T-cell (primary cell): ENCODE measurements at regions of chr11 and their contacts with region 1.

Region 1: DNA sequence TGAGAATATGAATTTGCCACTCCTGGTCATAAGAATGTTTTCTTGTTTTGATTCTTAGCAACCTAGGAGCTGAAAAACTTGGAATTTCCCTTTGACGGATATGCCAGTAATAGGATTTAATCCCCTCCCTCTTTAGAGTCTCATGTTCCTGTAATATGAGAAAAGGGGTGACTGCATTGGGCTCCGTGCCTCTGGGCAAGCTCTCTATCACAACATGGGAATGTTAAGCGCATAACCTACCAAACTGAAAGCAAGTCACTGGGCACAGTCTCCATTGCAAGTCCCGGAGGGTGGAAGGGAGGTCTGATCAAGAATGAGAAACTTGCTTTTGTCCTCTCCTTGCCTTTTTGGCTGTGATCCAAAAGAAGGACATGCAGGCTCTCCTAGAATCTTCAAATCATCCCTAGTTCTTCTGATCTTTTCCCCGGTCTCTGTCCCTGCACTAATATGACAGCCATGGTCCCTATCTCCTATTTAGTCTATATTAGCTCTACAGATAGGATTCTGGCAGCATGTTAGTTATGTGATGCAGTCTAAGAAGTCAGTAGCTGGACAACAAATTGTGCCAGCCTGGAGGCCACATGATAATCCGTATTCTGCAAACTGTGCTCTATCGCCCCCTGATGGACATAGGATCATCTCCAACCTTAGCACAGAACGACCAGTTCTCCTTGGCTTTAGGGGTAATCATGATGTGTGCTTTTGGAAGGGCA is 11.7 kb downstream of the OR10D3 start:
- DNase-seq: peak in 19 of 35 experiments; percentile 4 to 59 (median 14)
- ATAC-seq: peak in 1 of 4 experiments; percentile 40
- H3K4me3 ChIP-seq: no peak overlapping the region
- H3K4me3 Mint-ChIP-seq: no peak overlapping the region
- H3K27ac ChIP-seq: no peak overlapping the region
- H3K27ac Mint-ChIP-seq: no peak overlapping the region
- H3K4me1 ChIP-seq: no peaks in the 10 kb centered on the region
- H3K4me1 Mint-ChIP-seq: no peaks in the 10 kb centered on the region
- H3K27me3 ChIP-seq: no peaks in the 10 kb centered on the region
- H3K27me3 Mint-ChIP-seq: peaks cover 9 to 22% of the 10 kb centered on the region in 2 donors

Region 2: DNA sequence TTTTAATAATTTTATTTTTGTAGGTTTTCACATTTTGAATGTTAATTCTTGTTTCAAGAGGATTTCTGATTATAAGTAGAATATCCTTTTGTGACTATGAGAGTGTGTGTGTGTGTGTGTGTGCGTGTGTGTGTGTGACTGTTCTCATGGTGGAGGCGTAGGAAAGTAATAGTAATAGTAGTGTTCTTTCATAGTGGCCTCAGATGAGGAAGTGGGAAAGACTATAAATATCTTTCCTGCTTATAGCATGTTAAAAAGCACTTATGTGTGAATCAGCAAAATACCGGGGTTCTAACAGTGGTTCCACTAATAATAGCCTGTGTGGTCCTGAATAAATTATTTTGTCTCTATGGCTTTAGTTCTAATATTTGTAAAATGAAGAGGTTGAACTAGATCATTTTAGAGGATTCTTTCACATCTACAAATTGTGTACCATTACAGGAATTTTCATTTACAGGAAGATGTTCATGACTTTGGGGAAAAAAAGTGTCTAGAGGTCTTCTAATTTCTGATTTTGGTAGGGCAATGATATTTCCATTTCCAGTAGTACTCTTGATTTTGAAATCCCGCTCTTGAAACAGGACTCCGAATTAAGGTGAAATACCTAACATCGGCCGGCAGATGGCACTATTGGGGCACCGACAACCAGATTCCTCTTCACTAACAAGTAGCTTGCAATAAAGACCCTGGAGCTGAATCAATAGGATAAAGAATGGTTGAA is 123.8 kb before region 1 on chr11:
- CTCF ChIA-PET with region 1: interaction called, 6 to 14 read pairs
- POLR2A ChIA-PET with region 1: no interaction called
- DNase-seq: peak in 33 of 35 experiments; percentile 17 to 77 (median 47)
- ATAC-seq: peak in 1 of 4 experiments; percentile 35
- H3K4me3 ChIP-seq: no peak overlapping the region
- H3K4me3 Mint-ChIP-seq: no peak overlapping the region
- H3K27ac ChIP-seq: no peak overlapping the region
- H3K27ac Mint-ChIP-seq: no peak overlapping the region
- H3K4me1 ChIP-seq: peaks cover 0 to 9% of the 10 kb centered on the region in 2 experiments
- H3K4me1 Mint-ChIP-seq: peaks cover 0 to 11% (median 7%) of the 10 kb centered on the region in 3 donors
- H3K27me3 ChIP-seq: peaks cover 0 to 30% of the 10 kb centered on the region in 2 experiments
- H3K27me3 Mint-ChIP-seq: peaks cover 42 to 63% of the 10 kb centered on the region in 2 donors

Region 3: DNA sequence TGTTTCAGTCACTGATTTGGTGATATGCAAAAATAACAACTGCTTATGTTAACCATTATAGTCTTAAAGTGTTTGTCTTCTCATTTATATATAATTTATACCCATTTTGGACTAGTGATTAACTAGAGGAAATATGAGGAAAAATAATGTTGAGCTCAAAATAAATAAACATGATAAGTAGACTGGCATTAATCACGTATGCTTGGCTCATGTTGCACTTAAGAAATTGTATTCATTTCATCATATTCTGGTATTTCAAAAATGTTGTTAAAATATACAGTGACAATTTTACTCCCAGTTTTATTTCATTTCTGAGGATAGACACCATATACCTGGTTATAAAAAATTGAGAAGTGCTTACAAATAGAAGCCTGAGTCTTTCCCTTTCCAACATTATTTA is 15.5 kb before region 1 on chr11:
- CTCF ChIA-PET with region 1: no interaction called
- POLR2A ChIA-PET with region 1: no interaction called
- DNase-seq: no peak
- ATAC-seq: no peak
- H3K4me3 ChIP-seq: no peak overlapping the region
- H3K4me3 Mint-ChIP-seq: no peak overlapping the region
- H3K27ac ChIP-seq: no peak overlapping the region
- H3K27ac Mint-ChIP-seq: no peak overlapping the region
- H3K4me1 ChIP-seq: no peaks in the 10 kb centered on the region
- H3K4me1 Mint-ChIP-seq: no peaks in the 10 kb centered on the region
- H3K27me3 ChIP-seq: no peaks in the 10 kb centered on the region
- H3K27me3 Mint-ChIP-seq: peaks cover 2 to 7% of the 10 kb centered on the region in 2 donors

Region 4: GRCh38 chr11:124536520-124536919 is 341.7 kb after region 1 on chr11:
- CTCF ChIA-PET with region 1: no interaction called
- POLR2A ChIA-PET with region 1: no interaction called
- DNase-seq: no peak
- ATAC-seq: no peak
- H3K4me3 ChIP-seq: no peak overlapping the region
- H3K4me3 Mint-ChIP-seq: no peak overlapping the region
- H3K27ac ChIP-seq: no peak overlapping the region
- H3K27ac Mint-ChIP-seq: no peak overlapping the region
- H3K4me1 ChIP-seq: no peaks in the 10 kb centered on the region
- H3K4me1 Mint-ChIP-seq: no peaks in the 10 kb centered on the region
- H3K27me3 ChIP-seq: peaks cover 0 to 13% of the 10 kb centered on the region in 2 experiments
- H3K27me3 Mint-ChIP-seq: peaks cover 27 to 53% of the 10 kb centered on the region in 2 donors